ENCODE measurements at regions of chr19 and their contacts with region 1.

Region 1: DNA sequence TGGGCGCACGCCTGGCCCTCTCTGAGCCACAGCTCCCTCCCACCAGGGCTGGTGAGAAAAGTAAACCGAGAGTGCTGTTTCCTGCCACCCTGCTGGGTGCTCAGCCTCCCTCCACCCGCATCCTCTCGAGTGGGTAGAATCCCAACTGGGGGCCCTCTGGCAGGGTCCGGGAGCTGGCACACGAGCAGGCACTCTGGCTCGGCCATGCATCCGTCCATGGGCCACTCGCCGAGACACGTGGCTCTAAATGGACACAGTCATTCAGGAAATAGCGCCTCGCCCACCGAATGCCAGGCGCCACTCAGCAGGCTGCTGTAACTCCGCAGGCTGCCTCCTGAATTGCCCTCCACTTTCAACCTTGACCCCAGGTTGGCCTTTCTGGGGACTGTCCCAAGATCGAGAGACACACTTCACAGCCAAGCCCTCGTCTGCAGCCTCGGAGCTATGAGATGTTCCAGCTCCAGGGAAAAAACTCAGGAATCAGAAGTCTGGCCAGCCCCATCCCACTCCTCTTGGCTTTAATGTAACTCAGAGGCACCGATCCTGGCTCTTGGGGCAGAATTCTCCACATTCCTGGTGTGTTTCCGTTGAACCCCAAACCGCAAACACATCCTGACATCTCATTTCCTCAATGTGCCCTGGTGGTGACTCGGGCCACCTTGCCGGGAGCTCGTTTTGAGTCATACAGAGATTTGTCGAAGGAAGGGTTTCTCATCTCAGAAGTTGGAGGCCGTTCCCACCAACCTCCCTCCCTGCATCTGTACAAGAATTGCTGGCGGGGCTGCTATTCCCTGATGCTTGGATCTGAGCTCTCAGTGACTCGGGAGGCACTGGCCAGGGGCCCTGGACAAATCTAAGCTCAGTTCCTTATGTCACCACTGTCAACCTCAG is 14.1 kb downstream of the KLF2 start:
- DNase-seq: peak; percentile 86
- ATAC-seq: peak; percentile 58
- H3K4me3 Mint-ChIP-seq: peak overlapping the region; percentile 40
- H3K27ac Mint-ChIP-seq: peak overlapping the region; percentile 41
- H3K4me1 Mint-ChIP-seq: peaks cover 55% of the 10 kb centered on the region
- H3K27me3 Mint-ChIP-seq: peaks cover 8% of the 10 kb centered on the region
- CTCF ChIP-seq: no peak

Region 2: GRCh38 chr19:16301999-16302694 is 36.6 kb before region 1 on chr19:
- CTCF ChIA-PET with region 1: no interaction called
- POLR2A ChIA-PET with region 1: no interaction called
- intact Hi-C with region 1: no loop called
- DNase-seq: no peak
- ATAC-seq: no peak
- H3K4me3 Mint-ChIP-seq: no peak overlapping the region
- H3K27ac Mint-ChIP-seq: no peak overlapping the region
- H3K4me1 Mint-ChIP-seq: no peaks in the 10 kb centered on the region
- H3K27me3 Mint-ChIP-seq: no peaks in the 10 kb centered on the region
- CTCF ChIP-seq: no peak

Region 3: GRCh38 chr19:16371540-16371986 is 32.8 kb after region 1 on chr19:
- CTCF ChIA-PET with region 1: interaction called, 16 read pairs
- POLR2A ChIA-PET with region 1: interaction called, 12 read pairs
- intact Hi-C with region 1: loop called (anchors 2 kb)
- DNase-seq: peak; percentile 95
- ATAC-seq: peak; percentile 79
- H3K4me3 Mint-ChIP-seq: peak overlapping the region; percentile 3
- H3K27ac Mint-ChIP-seq: peak overlapping the region; percentile 54
- H3K4me1 Mint-ChIP-seq: peaks cover 42% of the 10 kb centered on the region
- H3K27me3 Mint-ChIP-seq: peaks cover 11% of the 10 kb centered on the region
- CTCF ChIP-seq: no peak

Region 4: DNA sequence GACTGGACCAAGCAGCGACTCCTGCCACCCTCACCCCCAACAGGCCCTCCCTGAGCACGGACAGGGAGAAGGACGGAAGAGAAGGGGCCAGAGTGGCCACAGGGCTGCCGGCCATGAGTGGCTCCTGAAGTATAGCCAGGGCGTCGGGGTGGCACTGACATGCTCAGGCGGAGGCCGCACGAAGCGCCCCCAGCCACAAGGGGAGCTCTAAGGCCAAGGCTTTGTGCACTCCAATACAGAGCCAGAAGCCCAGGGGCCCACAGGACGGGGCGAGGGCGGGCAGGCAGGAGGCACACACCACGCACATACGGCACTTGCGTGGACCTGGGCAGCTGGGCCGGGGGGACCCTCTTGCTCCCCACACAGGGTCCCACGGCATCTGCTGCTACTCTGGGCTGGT is 37.9 kb after region 1 on chr19:
- CTCF ChIA-PET with region 1: interaction called, 16 read pairs
- POLR2A ChIA-PET with region 1: interaction called, 12 read pairs
- intact Hi-C with region 1: no loop called
- DNase-seq: peak; percentile 60
- ATAC-seq: peak; percentile 52
- H3K4me3 Mint-ChIP-seq: no peak overlapping the region
- H3K27ac Mint-ChIP-seq: no peak overlapping the region
- H3K4me1 Mint-ChIP-seq: peaks cover 61% of the 10 kb centered on the region
- H3K27me3 Mint-ChIP-seq: no peaks in the 10 kb centered on the region
- CTCF ChIP-seq: peak; percentile 73